ENCODE measurements at regions of chr2 and their contacts with region 1.

Region 1: DNA sequence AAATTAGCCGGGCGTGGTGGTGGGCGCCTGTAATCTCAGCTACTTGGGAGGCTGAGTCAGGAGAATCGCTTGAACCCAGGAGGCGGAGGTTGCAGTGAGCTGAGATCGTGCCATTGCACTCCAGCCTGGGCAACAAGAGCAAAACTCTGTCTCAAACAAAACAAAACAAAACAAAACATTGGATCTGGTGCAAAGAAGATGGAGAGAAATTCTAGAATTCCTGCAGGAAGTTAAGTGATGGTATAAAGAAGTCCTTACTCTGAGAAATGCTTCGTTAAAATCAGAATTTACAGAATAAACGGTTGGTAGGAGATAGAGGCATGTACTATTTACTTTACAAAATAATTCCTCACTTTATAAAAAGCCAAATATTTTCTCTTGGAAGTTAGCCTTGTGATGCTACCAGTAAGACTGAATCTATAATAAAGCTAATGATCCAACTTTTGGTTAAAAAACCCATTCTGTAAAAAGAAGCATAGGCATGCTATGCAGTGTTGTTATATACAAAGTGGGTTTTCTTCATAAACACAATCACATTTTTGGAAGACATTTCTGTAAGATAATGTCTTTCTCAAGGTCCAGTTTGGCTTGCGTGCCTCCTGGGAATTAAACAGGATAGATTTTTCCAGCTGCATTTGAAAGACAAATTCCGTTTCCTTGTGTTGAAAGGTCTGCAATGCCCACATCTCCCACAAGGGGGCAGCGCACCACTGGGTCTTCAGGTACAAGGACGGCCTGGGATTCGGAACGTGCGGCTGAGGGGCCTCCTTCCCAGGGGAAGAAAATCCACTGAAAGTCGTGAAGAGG is 35.6 kb upstream of the PNO1 start:
- DNase-seq: peak; percentile 71 to 81 (median 80)
- H3K4me3 ChIP-seq: peak overlapping the region in 2 of 7 experiments; percentile 39 to 40
- H3K27ac ChIP-seq: no peak overlapping the region
- H3K4me1 ChIP-seq: peaks cover 0 to 12% (median 3%) of the 10 kb centered on the region in 4 experiments
- H3K27me3 ChIP-seq: no peaks in the 10 kb centered on the region

Region 2: DNA sequence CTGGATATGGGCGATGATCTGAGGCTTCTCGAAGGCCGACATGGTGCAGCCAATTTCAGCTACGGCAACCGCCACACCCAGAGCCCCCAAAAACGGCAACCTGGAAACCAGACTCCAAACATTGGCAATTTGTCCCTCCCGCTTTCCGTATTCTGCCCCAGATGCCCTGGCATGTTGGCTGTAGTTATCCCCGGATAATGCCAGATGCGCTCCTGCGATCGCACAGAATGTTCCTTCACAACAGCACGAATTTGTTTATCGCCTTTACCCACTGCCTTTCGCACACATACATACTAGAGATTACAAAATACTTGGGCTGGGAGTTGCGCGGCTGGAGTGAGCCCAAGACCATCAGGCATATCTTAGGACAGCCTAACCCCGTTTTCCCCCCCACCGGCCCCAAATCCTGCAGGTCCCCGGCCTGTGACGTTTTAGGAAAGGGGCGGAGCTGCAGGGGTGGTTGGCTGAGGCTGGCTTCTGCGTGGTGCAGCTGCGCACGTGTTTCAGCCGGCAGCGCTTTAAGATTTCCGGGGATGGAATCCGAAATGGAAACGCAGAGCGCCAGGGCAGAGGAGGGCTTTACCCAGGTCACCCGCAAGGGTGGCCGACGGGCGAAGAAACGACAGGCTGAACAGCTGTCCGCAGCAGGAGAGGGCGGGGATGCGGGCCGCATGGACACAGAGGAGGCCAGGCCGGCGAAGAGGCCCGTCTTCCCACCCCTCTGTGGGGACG is 35.5 kb after region 1 on chr2 and contains the start of gene PNO1:
- CTCF ChIA-PET with region 1: interaction called, 15 read pairs
- POLR2A ChIA-PET with region 1: no interaction called
- DNase-seq: peak; percentile 97 to 98 (median 98)
- H3K4me3 ChIP-seq: peak within 1 kb of the TSS; percentile 80 to 98 (median 95)
- H3K27ac ChIP-seq: peak within 1 kb of the TSS; percentile 99
- H3K4me1 ChIP-seq: peaks cover 21 to 41% (median 32%) of the 10 kb centered on the region in 4 experiments
- H3K27me3 ChIP-seq: no peaks in the 10 kb centered on the region

Region 3: GRCh38 chr2:68178954-68179627 is 57.0 kb after region 1 on chr2:
- CTCF ChIA-PET with region 1: interaction called, 52 read pairs
- POLR2A ChIA-PET with region 1: no interaction called
- DNase-seq: no peak
- H3K4me3 ChIP-seq: no peak overlapping the region
- H3K27ac ChIP-seq: no peak overlapping the region
- H3K4me1 ChIP-seq: peaks cover 0 to 12% (median 5%) of the 10 kb centered on the region in 4 experiments
- H3K27me3 ChIP-seq: no peaks in the 10 kb centered on the region

Region 4: GRCh38 chr2:68185541-68186164 is 63.6 kb after region 1 on chr2:
- CTCF ChIA-PET with region 1: interaction called, 52 read pairs
- POLR2A ChIA-PET with region 1: interaction called, 3 read pairs
- DNase-seq: peak; percentile 75 to 84 (median 79)
- H3K4me3 ChIP-seq: no peak overlapping the region
- H3K27ac ChIP-seq: no peak overlapping the region
- H3K4me1 ChIP-seq: peaks cover 0 to 6% (median 2%) of the 10 kb centered on the region in 4 experiments
- H3K27me3 ChIP-seq: no peaks in the 10 kb centered on the region

Region 5: GRCh38 chr2:68282811-68283418 is 160.8 kb after region 1 on chr2:
- CTCF ChIA-PET with region 1: interaction called, 28 read pairs
- POLR2A ChIA-PET with region 1: no interaction called
- DNase-seq: peak; percentile 38 to 65 (median 55)
- H3K4me3 ChIP-seq: no peak overlapping the region
- H3K27ac ChIP-seq: no peak overlapping the region
- H3K4me1 ChIP-seq: peaks cover 0 to 12% (median 5%) of the 10 kb centered on the region in 4 experiments
- H3K27me3 ChIP-seq: no peaks in the 10 kb centered on the region

Region 6: DNA sequence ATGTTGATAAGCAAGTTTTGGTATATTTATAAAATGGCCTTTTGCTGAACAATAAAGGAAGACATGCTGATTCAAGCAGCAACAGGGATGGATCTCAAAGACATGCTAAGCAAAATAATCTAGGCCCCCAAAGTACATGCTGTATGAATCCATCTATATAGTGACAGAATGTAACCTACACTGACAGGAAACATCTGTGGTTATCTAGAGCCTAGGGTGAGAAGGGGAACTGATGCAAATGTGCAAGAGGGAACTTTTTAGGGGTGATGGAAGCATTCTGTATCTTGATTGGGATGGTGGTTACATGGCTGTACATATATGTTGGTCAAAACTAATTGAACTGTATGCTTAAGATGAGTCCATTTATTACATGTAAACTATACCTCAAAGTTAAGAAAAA is 173.4 kb after region 1 on chr2:
- CTCF ChIA-PET with region 1: interaction called, 71 read pairs
- POLR2A ChIA-PET with region 1: no interaction called
- DNase-seq: peak; percentile 63 to 92 (median 86)
- H3K4me3 ChIP-seq: no peak overlapping the region
- H3K27ac ChIP-seq: no peak overlapping the region
- H3K4me1 ChIP-seq: peaks cover 9 to 30% (median 24%) of the 10 kb centered on the region in 4 experiments
- H3K27me3 ChIP-seq: no peaks in the 10 kb centered on the region

Measured in common myeloid progenitor, CD34-positive (primary cell).